Activated CD8-positive, alpha-beta memory T cell treated with anti-CD3 and anti-CD28 coated beads, Interleukin-2, amount 10 ng/mL, durations not matched to agents 7 days and 5 days (primary cell): ENCODE measurements at regions of chr11 and their contacts with region 1.

Region 1: DNA sequence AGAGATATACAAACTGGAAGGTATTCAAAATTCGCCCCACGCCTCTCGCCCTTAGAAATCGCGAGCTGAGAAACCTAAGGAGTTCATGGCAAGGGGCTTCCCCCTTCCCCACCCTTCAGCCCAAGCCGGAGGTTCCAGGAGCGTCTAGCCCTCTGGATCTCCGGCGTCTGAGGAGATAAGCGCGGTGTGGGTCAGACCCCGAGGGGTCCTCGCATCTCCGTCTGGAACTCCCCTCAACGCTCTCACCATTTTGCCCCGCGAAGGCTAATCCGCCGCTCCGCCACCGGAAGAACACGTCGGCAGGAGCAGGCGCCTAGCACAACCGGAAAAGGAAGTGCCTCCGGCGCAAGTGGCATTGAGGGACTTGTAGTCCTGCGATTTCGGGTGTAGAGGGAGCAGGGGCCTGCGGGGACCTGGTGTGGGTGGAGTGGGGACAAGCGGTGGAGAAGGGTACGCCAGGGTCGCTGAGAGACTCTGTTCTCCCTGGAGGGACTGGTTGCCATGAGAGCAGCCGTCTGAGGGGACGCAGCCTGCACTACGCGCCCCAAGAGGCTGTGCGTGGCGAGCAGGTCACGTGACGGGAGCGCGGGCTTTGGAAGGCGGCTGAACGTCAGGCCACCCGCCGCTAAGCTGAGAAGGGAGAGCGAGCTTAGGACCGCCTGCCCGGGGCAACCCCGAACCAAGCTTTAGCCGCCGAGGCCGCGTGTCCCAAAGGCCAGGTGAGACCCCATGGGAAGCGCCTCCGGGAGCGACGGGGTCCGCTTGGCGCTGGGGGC is at the starts of genes FEN1 and TMEM258:
- DNase-seq: peak; percentile 94
- ATAC-seq: peak; percentile 93
- H3K4me3 Mint-ChIP-seq: peak within 1 kb of the TSS; percentile 90
- H3K27ac Mint-ChIP-seq: peak within 1 kb of the TSS; percentile 100
- H3K4me1 Mint-ChIP-seq: peaks cover 47% of the 10 kb centered on the region
- H3K27me3 Mint-ChIP-seq: no peaks in the 10 kb centered on the region
- total RNA-seq, gene FEN1: 141 to 150 TPM
- total RNA-seq, gene TMEM258: 138 to 157 TPM

Region 2: DNA sequence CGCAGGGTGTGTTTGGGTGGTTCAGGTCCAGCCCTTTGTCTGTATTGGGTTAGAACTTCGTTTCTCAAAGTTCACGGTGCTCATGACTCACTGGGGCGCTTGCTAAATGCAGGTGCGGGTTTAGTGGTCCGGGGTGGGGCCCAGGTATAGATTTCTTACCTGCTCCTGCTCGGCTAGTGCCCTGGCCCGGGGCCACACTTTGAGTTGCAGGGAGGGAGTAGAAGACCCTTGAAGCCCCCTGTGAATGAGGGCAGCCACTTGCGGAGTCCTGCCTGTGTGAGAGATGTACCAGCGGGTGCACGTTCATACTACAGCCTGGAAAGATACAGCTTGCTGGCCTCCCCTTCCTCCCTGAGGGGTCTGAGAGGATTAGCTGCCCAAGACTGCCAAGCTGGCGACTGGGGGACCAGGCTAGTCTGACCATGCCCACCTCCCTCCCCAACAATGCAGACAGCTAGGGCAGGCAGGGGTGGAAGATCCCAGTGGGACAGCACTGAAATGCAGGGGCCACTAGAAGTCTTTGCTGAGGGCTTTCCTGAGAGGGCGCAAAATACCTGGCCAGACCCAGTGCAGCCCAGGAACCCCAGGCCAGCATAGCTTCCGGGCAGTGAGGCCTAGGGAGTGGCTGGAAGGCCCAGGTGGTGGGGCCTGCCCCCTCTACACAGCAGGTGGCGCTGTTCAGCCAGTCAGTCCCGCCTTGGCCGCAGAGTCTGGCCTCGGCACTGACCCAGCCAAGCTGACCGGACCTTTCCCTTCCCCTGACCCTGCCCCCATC is 45.1 kb before region 1 on chr11:
- CTCF ChIA-PET with region 1: interaction called, 17 read pairs
- DNase-seq: peak; percentile 65
- ATAC-seq: peak; percentile 59
- H3K4me3 Mint-ChIP-seq: no peak overlapping the region
- H3K27ac Mint-ChIP-seq: no peak overlapping the region
- H3K4me1 Mint-ChIP-seq: peaks cover 3% of the 10 kb centered on the region
- H3K27me3 Mint-ChIP-seq: peaks cover 18% of the 10 kb centered on the region

Region 3: GRCh38 chr11:61806785-61807184 is 14.3 kb after region 1 on chr11:
- CTCF ChIA-PET with region 1: interaction called, 173 read pairs
- DNase-seq: no peak
- ATAC-seq: no peak
- H3K4me3 Mint-ChIP-seq: no peak overlapping the region
- H3K27ac Mint-ChIP-seq: no peak overlapping the region
- H3K4me1 Mint-ChIP-seq: no peaks in the 10 kb centered on the region
- H3K27me3 Mint-ChIP-seq: no peaks in the 10 kb centered on the region

Region 4: DNA sequence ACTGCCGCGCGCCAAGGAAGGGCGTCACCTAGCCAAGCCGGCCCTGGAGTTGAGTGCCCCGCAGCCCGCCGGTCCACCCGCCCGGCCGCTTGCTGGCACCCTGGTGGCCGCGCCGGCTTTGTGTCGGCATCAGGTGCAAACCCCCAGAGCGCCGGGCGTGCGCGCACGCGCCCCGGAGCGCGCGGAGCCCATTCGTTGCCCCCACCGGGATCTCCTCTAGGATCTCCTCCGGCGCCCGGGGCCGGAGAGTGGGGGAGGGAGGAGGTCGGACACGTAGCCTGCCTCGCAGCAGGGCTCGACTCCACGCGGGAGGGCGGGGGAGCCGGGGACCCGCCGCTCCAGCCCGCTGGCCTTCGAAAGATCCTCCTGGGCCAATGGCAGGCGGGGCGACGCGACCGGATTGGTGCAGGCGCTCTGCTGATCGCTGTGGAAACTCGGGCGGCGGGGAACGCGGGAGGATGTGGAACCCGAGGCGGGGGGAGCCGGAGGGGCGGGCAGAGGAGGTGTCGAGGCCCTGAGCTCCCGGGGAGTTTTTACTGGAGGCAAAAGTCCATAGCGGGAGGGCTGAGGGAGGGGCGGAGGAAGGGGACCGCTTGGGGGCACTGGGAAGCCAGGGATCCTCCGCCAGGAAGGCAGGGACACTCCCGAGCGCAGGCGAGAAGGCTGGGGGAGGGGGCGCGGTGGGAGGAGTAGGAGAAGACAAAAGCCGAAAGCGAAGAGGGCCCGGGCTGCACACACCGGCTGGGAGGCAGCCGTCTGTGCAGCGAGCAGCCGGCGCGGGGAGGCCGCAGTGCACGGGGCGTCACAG is 35.3 kb after region 1 on chr11 and contains the start of gene FADS2:
- CTCF ChIA-PET with region 1: interaction called, 10 read pairs
- DNase-seq: peak; percentile 94
- ATAC-seq: peak; percentile 89
- H3K4me3 Mint-ChIP-seq: peak within 1 kb of the TSS; percentile 85
- H3K27ac Mint-ChIP-seq: peak within 1 kb of the TSS; percentile 90
- H3K4me1 Mint-ChIP-seq: peaks cover 43% of the 10 kb centered on the region
- H3K27me3 Mint-ChIP-seq: peaks cover 17% of the 10 kb centered on the region
- total RNA-seq, gene FADS2: 174 to 184 TPM

Region 5: DNA sequence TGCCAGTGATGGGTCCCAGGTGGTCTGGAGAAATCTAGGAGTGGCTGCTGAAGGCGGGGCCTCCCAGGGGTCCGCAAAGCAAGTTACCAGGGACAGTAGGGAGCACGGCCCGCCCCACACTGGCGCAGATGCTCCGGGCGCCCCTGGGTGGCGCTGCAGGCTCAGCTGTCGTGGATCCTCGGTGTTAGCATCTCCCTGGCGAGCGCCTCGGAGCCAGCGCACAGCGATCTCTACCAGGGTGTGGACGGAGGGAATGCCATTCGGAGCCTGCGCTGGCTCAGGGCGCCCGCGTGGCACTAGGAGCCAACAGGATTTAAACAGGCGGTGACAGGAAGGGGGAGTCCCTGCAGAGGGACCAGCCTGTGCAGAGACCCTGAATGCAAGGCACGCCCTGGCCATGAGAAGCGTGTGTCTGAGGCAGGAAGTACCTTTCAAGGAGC is 78.7 kb after region 1 on chr11:
- CTCF ChIA-PET with region 1: interaction called, 24 read pairs
- DNase-seq: peak; percentile 73
- ATAC-seq: peak; percentile 95
- H3K4me3 Mint-ChIP-seq: peak overlapping the region; percentile 61
- H3K27ac Mint-ChIP-seq: no peak overlapping the region
- H3K4me1 Mint-ChIP-seq: peaks cover 5% of the 10 kb centered on the region
- H3K27me3 Mint-ChIP-seq: peaks cover 4% of the 10 kb centered on the region

Region 6: DNA sequence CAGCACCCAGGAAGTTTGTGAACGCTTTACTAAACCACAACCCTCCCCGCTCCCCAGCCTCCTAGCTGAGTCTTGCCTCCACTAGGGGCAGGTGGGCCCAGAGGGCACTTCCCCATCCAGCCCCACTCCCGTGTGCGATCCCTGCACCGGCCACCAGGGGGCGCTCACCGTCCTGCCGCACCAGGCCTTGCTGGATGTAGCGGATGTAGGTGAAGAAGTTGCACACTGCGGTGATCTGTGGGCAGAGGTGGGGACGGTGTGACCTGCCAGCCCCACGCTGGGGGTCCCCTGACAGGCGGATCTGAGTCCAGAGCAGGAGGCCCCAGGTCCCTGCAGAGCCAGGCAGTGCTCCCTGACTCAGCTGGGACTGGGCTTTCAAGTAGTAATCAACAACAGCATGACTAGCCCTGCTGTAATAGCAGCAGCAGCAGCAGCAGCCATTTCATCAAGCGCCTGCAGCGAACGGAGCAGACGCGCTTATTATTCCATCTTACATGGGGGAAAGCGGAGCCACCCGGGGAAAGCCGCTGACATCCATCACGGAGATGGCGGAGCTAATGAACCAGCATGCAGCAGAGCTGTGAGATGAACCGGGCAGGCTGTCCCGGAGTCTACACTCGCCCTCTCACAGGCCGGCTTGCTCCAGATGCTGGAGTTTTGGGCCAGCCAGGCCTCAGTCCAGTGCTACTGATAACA is 106.8 kb after region 1 on chr11:
- CTCF ChIA-PET with region 1: interaction called, 42 read pairs
- DNase-seq: peak; percentile 92
- ATAC-seq: peak; percentile 94
- H3K4me3 Mint-ChIP-seq: no peak overlapping the region
- H3K27ac Mint-ChIP-seq: peak overlapping the region; percentile 55
- H3K4me1 Mint-ChIP-seq: peaks cover 6% of the 10 kb centered on the region
- H3K27me3 Mint-ChIP-seq: peaks cover 3% of the 10 kb centered on the region

Region 7: GRCh38 chr11:62081378-62082291 is 289.1 kb after region 1 on chr11:
- CTCF ChIA-PET with region 1: interaction called, 44 read pairs
- DNase-seq: peak; percentile 83
- ATAC-seq: peak; percentile 85
- H3K4me3 Mint-ChIP-seq: peak overlapping the region; percentile 20
- H3K27ac Mint-ChIP-seq: no peak overlapping the region
- H3K4me1 Mint-ChIP-seq: peaks cover 8% of the 10 kb centered on the region
- H3K27me3 Mint-ChIP-seq: peaks cover 6% of the 10 kb centered on the region